B cell (primary cell): ENCODE measurements at regions of chr11 and their contacts with region 1.

Region 1: GRCh38 chr11:9716275-9717039 is 52.6 kb downstream of the SWAP70 start:
- DNase-seq: peak; percentile 79
- ATAC-seq: peak; percentile 69
- H3K4me3 ChIP-seq: no peak overlapping the region
- H3K4me3 Mint-ChIP-seq: peak overlapping the region; percentile 58
- H3K27ac ChIP-seq: peak overlapping the region; percentile 60 to 66
- H3K27ac Mint-ChIP-seq: peak overlapping the region; percentile 90
- H3K4me1 ChIP-seq: peaks cover 82 to 91% of the 10 kb centered on the region in 2 donors
- H3K4me1 Mint-ChIP-seq: peaks cover 77% of the 10 kb centered on the region
- H3K27me3 ChIP-seq: no peaks in the 10 kb centered on the region
- H3K27me3 Mint-ChIP-seq: no peaks in the 10 kb centered on the region
- CTCF ChIP-seq: no peak

Region 2: DNA sequence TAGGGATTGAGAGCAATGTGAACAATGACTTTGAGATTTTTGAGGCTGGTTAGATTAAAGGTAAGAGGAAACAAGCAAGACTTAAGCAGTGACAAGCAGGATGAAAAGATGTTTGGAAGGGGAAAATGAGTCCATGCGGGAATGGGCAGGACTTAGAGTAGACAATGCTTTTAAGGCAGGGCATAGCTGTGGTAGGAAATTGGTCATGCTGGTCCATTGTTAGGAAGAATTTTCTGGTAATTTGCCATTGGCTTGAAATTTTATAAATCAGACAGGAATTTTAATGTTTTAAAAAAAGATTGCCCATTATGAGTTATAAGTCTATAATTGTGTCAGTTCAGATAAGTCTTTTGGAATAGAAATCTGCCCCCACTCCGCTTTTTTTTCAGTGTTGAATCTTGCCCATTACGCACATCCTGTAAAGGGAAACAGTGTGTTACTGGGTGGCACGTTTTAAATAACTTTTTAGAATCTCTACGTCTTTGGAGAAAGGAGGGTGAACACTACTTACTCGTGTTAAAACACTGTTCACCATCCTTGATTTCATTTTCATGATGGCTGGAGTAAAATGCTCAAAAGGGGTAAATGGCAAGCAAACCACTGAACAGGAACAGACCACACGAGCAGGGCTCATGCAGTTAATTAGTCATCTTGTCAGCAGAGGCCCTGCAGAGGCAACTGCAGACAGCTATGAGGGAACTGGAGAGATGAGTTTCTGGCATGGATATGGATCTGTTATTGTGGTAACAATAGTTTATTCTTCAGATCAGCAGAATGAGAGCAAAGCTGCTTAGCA is 27.5 kb before region 1 on chr11:
- CTCF ChIA-PET with region 1: interaction called, 6 read pairs
- POLR2A ChIA-PET with region 1: interaction called, 4 read pairs
- intact Hi-C with region 1: loop called (anchors 2 kb)
- DNase-seq: peak; percentile 78
- ATAC-seq: peak; percentile 74
- H3K4me3 ChIP-seq: peak overlapping the region in 4 of 5 experiments; percentile 7 to 50 (median 26)
- H3K4me3 Mint-ChIP-seq: no peak overlapping the region
- H3K27ac ChIP-seq: peak overlapping the region; percentile 91 to 96
- H3K27ac Mint-ChIP-seq: no peak overlapping the region
- H3K4me1 ChIP-seq: peaks cover 85 to 88% of the 10 kb centered on the region in 2 donors
- H3K4me1 Mint-ChIP-seq: peaks cover 60% of the 10 kb centered on the region
- H3K27me3 ChIP-seq: no peaks in the 10 kb centered on the region
- H3K27me3 Mint-ChIP-seq: no peaks in the 10 kb centered on the region
- CTCF ChIP-seq: no peak

Region 3: DNA sequence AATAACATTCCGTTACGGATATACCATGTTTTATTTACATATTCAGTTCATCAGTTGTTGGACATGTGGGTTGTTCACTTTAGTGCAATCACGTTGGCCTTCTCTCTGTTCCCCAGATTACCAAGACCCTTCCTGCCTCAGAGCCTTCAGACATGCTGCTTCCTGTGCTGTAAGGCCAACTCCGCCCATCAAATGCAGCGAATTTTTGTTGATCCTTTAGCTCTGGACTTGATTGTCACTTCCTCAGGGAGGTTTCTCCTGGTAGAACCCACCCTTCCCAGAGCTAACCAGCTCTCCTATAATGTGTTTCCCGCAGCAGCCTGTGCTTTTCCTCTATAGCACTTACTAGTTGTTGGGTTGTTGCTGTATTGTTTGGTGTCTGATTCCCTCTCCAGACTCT is 13.2 kb before region 1 on chr11:
- CTCF ChIA-PET with region 1: interaction called, 5 read pairs
- POLR2A ChIA-PET with region 1: interaction called, 9 read pairs
- intact Hi-C with region 1: loop called (anchors 1 kb)
- DNase-seq: peak; percentile 47
- ATAC-seq: no peak
- H3K4me3 ChIP-seq: no peak overlapping the region
- H3K4me3 Mint-ChIP-seq: peak overlapping the region; percentile 52
- H3K27ac ChIP-seq: peak overlapping the region; percentile 52 to 82
- H3K27ac Mint-ChIP-seq: peak overlapping the region; percentile 85
- H3K4me1 ChIP-seq: peaks cover 66 to 75% of the 10 kb centered on the region in 2 donors
- H3K4me1 Mint-ChIP-seq: peaks cover 66% of the 10 kb centered on the region
- H3K27me3 ChIP-seq: no peaks in the 10 kb centered on the region
- H3K27me3 Mint-ChIP-seq: no peaks in the 10 kb centered on the region
- CTCF ChIP-seq: no peak

Region 4: DNA sequence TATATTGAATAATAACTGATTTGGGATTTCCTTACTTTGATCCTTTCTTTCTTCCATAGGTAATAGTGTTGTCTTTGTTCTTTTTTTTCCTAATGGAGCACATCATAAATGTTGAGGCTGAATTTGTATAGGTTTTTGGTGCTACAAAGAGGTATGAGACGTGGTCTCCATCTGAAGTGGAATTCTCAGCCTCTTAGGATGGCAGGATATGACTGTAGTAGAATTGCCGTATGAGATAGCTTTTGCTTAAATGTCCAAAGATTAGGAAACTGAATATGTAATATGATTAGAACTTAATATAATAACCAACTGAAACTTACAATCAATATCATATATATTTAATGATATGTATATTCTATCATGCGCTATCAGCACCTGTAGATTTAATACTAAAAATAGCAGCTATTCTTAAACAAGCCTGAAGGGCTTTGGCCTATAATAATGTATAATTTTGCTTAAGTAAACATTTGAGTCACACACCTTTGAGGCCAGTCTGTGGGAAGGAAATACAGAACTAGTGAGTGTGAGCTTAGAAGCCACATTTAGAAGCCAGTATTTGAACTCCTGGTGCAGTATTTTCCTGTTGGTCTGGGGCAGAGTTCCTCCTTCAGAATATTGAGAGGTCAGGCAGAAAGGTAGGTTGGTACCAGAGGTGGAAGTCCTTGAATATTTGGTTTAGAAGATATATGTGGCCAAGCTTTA is 10.0 kb after region 1 on chr11:
- CTCF ChIA-PET with region 1: interaction called, 7 read pairs
- POLR2A ChIA-PET with region 1: interaction called, 7 read pairs
- intact Hi-C with region 1: loop called (anchors 1 kb)
- DNase-seq: no peak
- ATAC-seq: peak; percentile 34
- H3K4me3 ChIP-seq: no peak overlapping the region
- H3K4me3 Mint-ChIP-seq: peak overlapping the region; percentile 65
- H3K27ac ChIP-seq: peak overlapping the region; percentile 14 to 86
- H3K27ac Mint-ChIP-seq: peak overlapping the region; percentile 87
- H3K4me1 ChIP-seq: peaks cover 68 to 76% of the 10 kb centered on the region in 2 donors
- H3K4me1 Mint-ChIP-seq: peaks cover 74% of the 10 kb centered on the region
- H3K27me3 ChIP-seq: no peaks in the 10 kb centered on the region
- H3K27me3 Mint-ChIP-seq: no peaks in the 10 kb centered on the region
- CTCF ChIP-seq: no peak